Pancreas (tissue), 10 donors: ENCODE measurements at regions of chr7 and their contacts with region 1.

Region 1: DNA sequence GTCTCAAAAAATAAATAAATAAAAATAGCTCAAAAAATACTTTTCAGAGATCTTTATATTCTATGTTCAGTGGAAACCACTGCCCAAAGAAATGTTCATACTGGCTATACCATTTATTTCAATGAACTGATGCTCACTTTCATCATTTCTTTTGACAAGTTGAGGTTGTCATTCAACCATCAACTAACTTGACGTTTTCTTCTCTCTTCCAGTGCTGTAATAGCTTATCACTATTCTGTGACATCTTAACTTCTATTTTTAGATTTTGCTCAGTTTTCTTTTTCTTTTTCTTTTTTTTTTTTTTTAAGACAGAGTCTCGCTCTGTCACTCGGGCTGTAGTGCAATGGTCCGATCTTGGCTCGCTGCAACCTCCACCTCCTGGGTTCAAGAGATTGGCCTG is 8.7 kb upstream of the CTAGE4 start:
- DNase-seq: no peak
- ATAC-seq: no peak
- H3K4me3 ChIP-seq: no peak overlapping the region
- H3K27ac ChIP-seq: no peak overlapping the region
- H3K4me1 ChIP-seq: no peaks in the 10 kb centered on the region
- H3K27me3 ChIP-seq: no peaks in the 10 kb centered on the region
- CTCF ChIP-seq: no peak

Region 2: GRCh38 chr7:144050093-144050492 is 124.5 kb before region 1 on chr7:
- intact Hi-C with region 1: no loop called
- DNase-seq: no peak
- ATAC-seq: no peak
- H3K4me3 ChIP-seq: no peak overlapping the region
- H3K27ac ChIP-seq: no peak overlapping the region
- H3K4me1 ChIP-seq: no peaks in the 10 kb centered on the region
- H3K27me3 ChIP-seq: no peaks in the 10 kb centered on the region
- CTCF ChIP-seq: no peak

Region 3: DNA sequence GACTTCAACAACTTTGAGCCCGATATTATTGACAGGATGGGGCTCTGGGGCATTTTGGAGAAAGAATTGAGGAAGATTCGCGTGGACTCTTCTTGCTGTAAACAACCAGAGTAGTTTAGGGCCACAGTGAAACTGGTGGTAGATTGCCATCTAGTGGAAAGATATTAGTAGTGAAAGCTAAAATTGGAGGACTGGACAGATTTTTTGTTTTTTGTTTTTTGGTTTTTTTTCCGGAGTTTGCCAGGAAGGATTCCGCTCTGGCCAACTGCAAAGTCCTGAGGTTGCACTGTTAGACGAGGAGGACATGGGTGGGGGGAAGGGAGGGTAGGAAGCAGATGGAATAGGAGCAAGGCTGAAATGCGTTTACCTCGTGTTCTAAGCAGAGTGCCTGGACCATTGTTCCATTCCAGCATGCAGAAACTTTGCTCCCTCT is 217.2 kb after region 1 on chr7:
- intact Hi-C with region 1: loop called in 1 of 3 experiments (anchors 10 kb)
- DNase-seq: peak in 1 of 6 donors; percentile 7
- ATAC-seq: peak; percentile 73 to 96 (median 90)
- H3K4me3 ChIP-seq: no peak overlapping the region
- H3K27ac ChIP-seq: no peak overlapping the region
- H3K4me1 ChIP-seq: no peaks in the 10 kb centered on the region
- H3K27me3 ChIP-seq: no peaks in the 10 kb centered on the region
- CTCF ChIP-seq: peak; percentile 39 to 61 (median 57)